Activated CD8-positive, alpha-beta T cell treated with anti-CD3 and anti-CD28 coated beads for 36 hours (primary cell): ENCODE measurements at regions of chr11 and their contacts with region 1.

Region 1: GRCh38 chr11:117946842-117947526 is 17.8 kb upstream of the TMPRSS13 start:
- DNase-seq: peak; percentile 91
- ATAC-seq: peak; percentile 50
- H3K4me3 Mint-ChIP-seq: no peak overlapping the region
- H3K27ac Mint-ChIP-seq: peak overlapping the region; percentile 41
- H3K4me1 Mint-ChIP-seq: peaks cover 79% of the 10 kb centered on the region
- H3K27me3 Mint-ChIP-seq: no peaks in the 10 kb centered on the region
- CTCF ChIP-seq: peak; percentile 95

Region 2: DNA sequence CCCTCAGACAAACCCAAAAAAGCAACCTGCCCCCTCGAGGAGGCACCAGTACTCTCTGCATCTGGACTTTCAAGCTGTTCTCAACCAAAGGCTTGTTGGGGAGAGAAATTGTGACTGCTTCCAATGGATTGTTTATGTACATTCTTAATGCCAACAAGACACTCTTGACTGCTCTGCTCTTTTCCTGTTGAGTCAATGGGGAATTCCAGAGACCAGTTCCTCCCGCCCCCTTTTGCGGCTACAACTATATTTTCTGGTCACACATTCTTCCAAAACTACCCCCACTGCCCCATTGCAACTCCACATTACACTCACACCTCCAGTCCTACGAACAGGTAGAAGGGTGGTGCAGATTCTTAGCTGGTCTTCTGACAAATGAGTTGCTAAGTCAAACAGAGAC is 336.9 kb before region 1 on chr11:
- CTCF ChIA-PET with region 1: no interaction called
- POLR2A ChIA-PET with region 1: no interaction called
- intact Hi-C with region 1: no loop called
- DNase-seq: peak; percentile 57
- ATAC-seq: peak; percentile 40
- H3K4me3 Mint-ChIP-seq: no peak overlapping the region
- H3K27ac Mint-ChIP-seq: no peak overlapping the region
- H3K4me1 Mint-ChIP-seq: peaks cover 20% of the 10 kb centered on the region
- H3K27me3 Mint-ChIP-seq: peaks cover 8% of the 10 kb centered on the region
- CTCF ChIP-seq: no peak

Region 3: GRCh38 chr11:117807482-117808327 is 139.3 kb before region 1 on chr11:
- CTCF ChIA-PET with region 1: interaction called, 91 read pairs
- POLR2A ChIA-PET with region 1: no interaction called
- intact Hi-C with region 1: no loop called
- DNase-seq: peak; percentile 91
- ATAC-seq: peak; percentile 74
- H3K4me3 Mint-ChIP-seq: no peak overlapping the region
- H3K27ac Mint-ChIP-seq: no peak overlapping the region
- H3K4me1 Mint-ChIP-seq: peaks cover 16% of the 10 kb centered on the region
- H3K27me3 Mint-ChIP-seq: no peaks in the 10 kb centered on the region
- CTCF ChIP-seq: peak; percentile 99

Region 4: GRCh38 chr11:117843666-117844484 is 103.1 kb before region 1 on chr11:
- CTCF ChIA-PET with region 1: interaction called, 205 read pairs
- POLR2A ChIA-PET with region 1: interaction called, 3 read pairs
- intact Hi-C with region 1: loop called (anchors 1 kb)
- DNase-seq: peak; percentile 92
- ATAC-seq: peak; percentile 96
- H3K4me3 Mint-ChIP-seq: no peak overlapping the region
- H3K27ac Mint-ChIP-seq: no peak overlapping the region
- H3K4me1 Mint-ChIP-seq: peaks cover 4% of the 10 kb centered on the region
- H3K27me3 Mint-ChIP-seq: no peaks in the 10 kb centered on the region
- CTCF ChIP-seq: peak; percentile 96

Region 5: DNA sequence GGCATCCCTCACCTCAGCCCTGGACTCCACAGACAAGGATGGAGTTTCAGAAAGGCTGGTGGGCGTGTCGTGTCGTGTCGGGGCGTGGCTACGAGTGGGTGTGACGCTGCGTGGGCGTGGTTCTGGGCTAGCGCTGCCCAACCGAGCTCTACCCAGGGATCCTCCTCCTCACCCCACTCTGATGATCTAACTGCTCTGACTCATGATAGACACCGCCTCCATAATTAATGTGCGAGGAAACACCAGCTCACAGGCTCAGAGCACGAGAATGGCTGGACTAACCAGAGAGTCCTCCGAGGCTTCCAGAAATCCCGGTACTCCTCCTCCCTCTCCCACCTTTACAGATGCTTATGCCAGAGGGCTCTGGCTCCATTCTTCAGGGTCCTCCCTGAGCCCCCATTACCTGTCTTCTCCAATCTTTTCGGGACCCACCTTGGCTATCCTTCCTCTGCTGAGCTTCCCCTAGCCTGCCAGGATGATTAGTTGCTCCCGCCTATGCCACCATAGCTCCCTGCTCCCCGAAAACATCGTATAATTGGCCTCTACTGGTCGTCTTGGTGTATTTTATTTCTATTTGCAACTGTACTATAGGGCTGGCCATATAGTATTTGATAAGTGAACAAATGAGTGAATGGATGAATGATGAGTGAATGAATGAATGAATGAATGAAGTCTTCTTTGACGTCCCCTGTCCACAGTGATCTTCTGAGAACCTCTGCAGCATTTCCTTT is 39.6 kb before region 1 on chr11:
- CTCF ChIA-PET with region 1: interaction called, 21 read pairs
- POLR2A ChIA-PET with region 1: interaction called, 3 read pairs
- intact Hi-C with region 1: no loop called
- DNase-seq: peak; percentile 90
- ATAC-seq: peak; percentile 98
- H3K4me3 Mint-ChIP-seq: peak overlapping the region; percentile 63
- H3K27ac Mint-ChIP-seq: peak overlapping the region; percentile 64
- H3K4me1 Mint-ChIP-seq: peaks cover 17% of the 10 kb centered on the region
- H3K27me3 Mint-ChIP-seq: no peaks in the 10 kb centered on the region
- CTCF ChIP-seq: no peak

Region 6: GRCh38 chr11:117959438-117960149 is 12.6 kb after region 1 on chr11:
- CTCF ChIA-PET with region 1: interaction called, 44 read pairs
- POLR2A ChIA-PET with region 1: interaction called, 7 read pairs
- intact Hi-C with region 1: no loop called
- DNase-seq: no peak
- ATAC-seq: peak; percentile 27
- H3K4me3 Mint-ChIP-seq: peak overlapping the region; percentile 20
- H3K27ac Mint-ChIP-seq: peak overlapping the region; percentile 88
- H3K4me1 Mint-ChIP-seq: peaks cover 49% of the 10 kb centered on the region
- H3K27me3 Mint-ChIP-seq: no peaks in the 10 kb centered on the region
- CTCF ChIP-seq: no peak

Region 7: GRCh38 chr11:117985953-117986887 is 39.2 kb after region 1 on chr11 and contains the start of gene IL10RA:
- CTCF ChIA-PET with region 1: interaction called, 386 read pairs
- POLR2A ChIA-PET with region 1: interaction called, 71 read pairs
- intact Hi-C with region 1: loop called (anchors 5 kb)
- DNase-seq: peak; percentile 89
- ATAC-seq: peak; percentile 85
- H3K4me3 Mint-ChIP-seq: peak within 1 kb of the TSS; percentile 80
- H3K27ac Mint-ChIP-seq: peak within 1 kb of the TSS; percentile 97
- H3K4me1 Mint-ChIP-seq: peaks cover 74% of the 10 kb centered on the region
- H3K27me3 Mint-ChIP-seq: no peaks in the 10 kb centered on the region
- CTCF ChIP-seq: no peak
- total RNA-seq, gene IL10RA: 73.3 to 80.9 TPM

Region 8: DNA sequence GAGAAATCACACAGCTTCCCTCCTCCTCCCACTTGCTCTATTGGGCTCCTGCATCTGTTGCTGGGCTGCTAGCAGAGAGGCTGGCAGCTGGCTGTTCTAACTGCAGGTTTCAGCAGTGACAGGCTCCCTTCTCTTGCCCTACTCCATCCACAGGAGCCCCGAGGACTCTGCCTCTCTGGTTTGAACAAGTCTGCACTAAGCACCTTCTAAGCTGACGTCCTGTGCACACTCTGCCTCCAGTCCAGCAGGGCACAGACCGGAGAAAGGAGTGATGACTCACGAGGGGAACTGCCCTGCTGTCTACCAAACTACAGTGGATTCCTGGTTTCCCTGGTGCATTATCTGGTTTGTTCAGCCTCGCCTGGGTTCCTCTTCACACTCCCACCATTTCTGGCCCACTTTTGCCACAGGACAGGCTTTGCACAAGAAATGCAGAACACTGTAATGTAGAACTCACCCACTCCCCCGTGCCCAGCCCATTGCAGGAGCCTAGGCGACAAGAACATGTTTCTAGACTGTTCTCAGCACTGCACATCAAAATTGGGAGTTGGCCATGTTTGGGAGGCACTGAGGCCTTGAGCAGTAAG is 65.2 kb after region 1 on chr11:
- CTCF ChIA-PET with region 1: interaction called, 10 read pairs
- POLR2A ChIA-PET with region 1: no interaction called
- intact Hi-C with region 1: no loop called
- DNase-seq: peak; percentile 48
- ATAC-seq: peak; percentile 54
- H3K4me3 Mint-ChIP-seq: no peak overlapping the region
- H3K27ac Mint-ChIP-seq: peak overlapping the region; percentile 74
- H3K4me1 Mint-ChIP-seq: peaks cover 96% of the 10 kb centered on the region
- H3K27me3 Mint-ChIP-seq: no peaks in the 10 kb centered on the region
- CTCF ChIP-seq: no peak